ENCODE measurements at regions of chr1 and their contacts with region 1.

Region 1: DNA sequence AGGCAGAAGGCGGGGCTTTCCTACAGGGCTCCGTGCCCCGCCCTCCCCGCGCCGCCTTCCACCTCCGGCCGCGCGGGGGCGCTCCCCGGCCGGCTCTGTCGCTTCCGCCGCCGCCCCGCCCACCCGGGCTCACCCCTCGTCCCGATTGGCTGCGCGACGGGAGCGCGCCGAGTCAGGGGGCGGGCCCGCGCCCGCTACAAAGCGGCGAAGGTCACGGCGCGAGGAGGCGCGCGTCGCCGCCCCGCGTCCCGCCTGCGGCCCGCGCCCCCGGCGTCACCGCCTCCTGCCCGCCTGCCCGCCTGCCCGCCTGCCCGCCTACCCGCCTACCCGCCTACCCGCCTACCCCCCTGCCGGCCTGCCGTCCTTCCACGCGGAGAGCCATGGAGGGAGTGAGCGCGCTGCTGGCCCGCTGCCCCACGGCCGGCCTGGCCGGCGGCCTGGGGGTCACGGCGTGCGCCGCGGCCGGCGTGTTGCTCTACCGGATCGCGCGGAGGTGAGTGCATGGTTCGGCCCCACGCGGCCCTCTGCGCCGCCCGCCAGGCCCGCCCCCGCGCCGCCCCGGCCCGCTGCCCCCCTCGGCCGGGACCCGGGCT is at the start of gene TMEM201:
- DNase-seq: peak; percentile 98 to 99 (median 99)
- ATAC-seq: peak; percentile 90
- H3K4me3 ChIP-seq: peak within 1 kb of the TSS; percentile 61
- H3K27ac ChIP-seq: peak within 1 kb of the TSS; percentile 76
- H3K4me1 ChIP-seq: peaks cover 31 to 52% of the 10 kb centered on the region in 2 experiments
- H3K27me3 ChIP-seq: no peaks in the 10 kb centered on the region
- CTCF ChIP-seq: peak; percentile 69 to 91 (median 89)
- EP300 ChIP-seq: 0 out of 2 replicates have a peak, but pooled peaks have one; percentile 20
- POLR2A ChIP-seq: no peak
- RAD21 ChIP-seq: peak; percentile 28 to 57; a peak in 3 of 4 replicates
- polyA plus RNA-seq, gene TMEM201: 0.42 to 0.46 TPM

Region 2: DNA sequence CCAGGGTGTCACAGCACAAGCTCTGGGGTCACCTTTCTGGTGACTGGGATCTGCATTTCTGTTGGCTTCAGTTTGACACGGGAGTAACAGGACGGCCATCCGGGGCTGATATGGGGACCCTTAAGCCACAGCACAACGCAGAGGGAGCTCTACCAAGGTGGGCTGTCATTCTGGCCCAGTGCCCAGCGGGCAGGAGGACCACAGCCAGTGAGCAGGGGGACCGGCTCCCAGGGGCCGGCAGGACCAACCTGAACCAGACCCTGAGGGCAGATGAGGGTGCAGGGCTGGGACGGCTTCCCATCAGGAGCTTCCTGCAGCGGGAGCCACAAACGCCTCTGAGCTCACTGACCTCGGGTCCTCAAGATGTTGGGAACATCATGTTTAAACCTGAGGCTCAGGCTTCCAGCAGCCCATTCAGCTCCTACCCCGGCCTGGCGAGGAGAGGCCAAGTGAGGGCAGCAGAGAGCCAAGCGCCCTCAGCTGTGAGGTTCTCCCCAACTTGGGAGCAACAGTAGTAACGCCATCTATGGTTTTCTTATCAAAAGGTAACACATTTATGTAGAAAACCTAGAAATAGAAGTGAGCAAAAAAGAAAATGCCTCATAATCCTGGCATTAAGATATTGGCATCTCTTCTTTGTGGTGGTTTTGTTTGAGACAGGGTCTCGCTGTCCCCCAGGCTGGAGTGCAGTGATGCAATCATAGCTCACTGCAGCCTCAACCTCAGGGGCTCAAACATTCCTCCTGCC is 26.8 kb after region 1 on chr1:
- CTCF ChIA-PET with region 1: no interaction called
- POLR2A ChIA-PET with region 1: interaction called, 12 read pairs
- in situ Hi-C with region 1: no loop called
- intact Hi-C with region 1: no loop called
- DNase-seq: peak; percentile 79 to 85 (median 82)
- ATAC-seq: peak; percentile 96
- H3K4me3 ChIP-seq: no peak overlapping the region
- H3K27ac ChIP-seq: no peak overlapping the region
- H3K4me1 ChIP-seq: peaks cover 4 to 22% of the 10 kb centered on the region in 2 experiments; a peak in 3 of 5 replicates
- H3K27me3 ChIP-seq: peaks cover 8 to 17% of the 10 kb centered on the region in 2 experiments
- CTCF ChIP-seq: peak; percentile 96 to 97 (median 96)
- EP300 ChIP-seq: peak; percentile 23; the same call in 1 of the 2 replicates
- POLR2A ChIP-seq: 0 out of 2 replicates have a peak, but pooled peaks have one; percentile 45
- RAD21 ChIP-seq: peak; percentile 57 to 75

Measured in K562 (cell line).